ENCODE measurements at regions of chr16 and their contacts with region 1.

Region 1: GRCh38 chr16:2777903-2778629 is 986 bp upstream of the ELOB start:
- DNase-seq: peak in 1 of 2 experiments; percentile 48
- H3K4me3 ChIP-seq: peak overlapping the region; percentile 76
- H3K4me3 Mint-ChIP-seq: peak overlapping the region; percentile 89
- H3K27ac Mint-ChIP-seq: peak overlapping the region; percentile 92
- H3K4me1 ChIP-seq: peaks cover 15% of the 10 kb centered on the region
- H3K4me1 Mint-ChIP-seq: peaks cover 1% of the 10 kb centered on the region
- H3K27me3 ChIP-seq: no peaks in the 10 kb centered on the region
- H3K27me3 Mint-ChIP-seq: no peaks in the 10 kb centered on the region
- CTCF ChIP-seq: no peak

Region 2: DNA sequence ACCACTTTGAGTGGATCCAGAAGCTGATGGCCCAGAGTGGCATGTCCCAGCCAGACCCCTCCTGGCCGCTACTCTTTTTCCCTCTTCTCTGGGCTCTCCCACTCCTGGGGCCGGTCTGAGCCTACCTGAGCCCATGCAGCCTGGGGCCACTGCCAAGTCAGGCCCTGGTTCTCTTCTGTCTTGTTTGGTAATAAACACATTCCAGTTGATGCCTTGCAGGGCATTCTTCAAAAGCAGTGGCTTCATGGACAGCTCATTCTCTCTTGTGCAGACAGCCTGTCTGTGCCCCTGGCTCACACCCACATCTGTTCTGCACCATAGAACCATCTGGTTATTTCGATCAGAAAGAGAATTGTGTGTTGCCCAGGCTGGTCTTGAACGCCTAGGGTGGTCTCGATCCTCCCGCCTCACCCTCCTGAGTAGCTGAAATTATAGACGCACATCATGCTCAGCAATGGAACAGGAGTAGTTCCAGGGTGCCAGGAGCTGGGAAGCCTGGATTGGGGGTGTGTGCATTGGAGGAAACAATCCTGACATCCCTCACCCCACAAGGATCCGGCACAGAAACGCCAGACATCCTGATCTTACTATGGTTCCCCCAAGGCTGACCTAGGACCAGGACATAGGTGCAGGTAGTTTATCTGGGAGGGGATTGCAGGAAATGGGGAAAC is 43.6 kb after region 1 on chr16:
- CTCF ChIA-PET with region 1: no interaction called
- POLR2A ChIA-PET with region 1: interaction called, 3 read pairs
- intact Hi-C with region 1: loop called (anchors 2 kb)
- DNase-seq: no peak
- H3K4me3 ChIP-seq: no peak overlapping the region
- H3K4me3 Mint-ChIP-seq: no peak overlapping the region
- H3K27ac Mint-ChIP-seq: no peak overlapping the region
- H3K4me1 ChIP-seq: no peaks in the 10 kb centered on the region
- H3K4me1 Mint-ChIP-seq: peaks cover 4% of the 10 kb centered on the region
- H3K27me3 ChIP-seq: no peaks in the 10 kb centered on the region
- H3K27me3 Mint-ChIP-seq: no peaks in the 10 kb centered on the region
- CTCF ChIP-seq: no peak

Region 3: GRCh38 chr16:2968738-2969544 is 190.9 kb after region 1 on chr16 and contains the start of gene PAQR4:
- CTCF ChIA-PET with region 1: no interaction called
- POLR2A ChIA-PET with region 1: no interaction called
- intact Hi-C with region 1: no loop called
- DNase-seq: peak; percentile 85 to 92
- H3K4me3 ChIP-seq: peak within 1 kb of the TSS; percentile 82
- H3K4me3 Mint-ChIP-seq: peak within 1 kb of the TSS; percentile 75
- H3K27ac Mint-ChIP-seq: peak within 1 kb of the TSS; percentile 50
- H3K4me1 ChIP-seq: peaks cover 11% of the 10 kb centered on the region
- H3K4me1 Mint-ChIP-seq: no peaks in the 10 kb centered on the region
- H3K27me3 ChIP-seq: no peaks in the 10 kb centered on the region
- H3K27me3 Mint-ChIP-seq: no peaks in the 10 kb centered on the region
- CTCF ChIP-seq: no peak
- total RNA-seq, gene PAQR4: 12.0 and 13.4 TPM in 2 replicates

Measured in Caco-2 (cell line).